ENCODE measurements at regions of chr19 and their contacts with region 1.

Region 1: DNA sequence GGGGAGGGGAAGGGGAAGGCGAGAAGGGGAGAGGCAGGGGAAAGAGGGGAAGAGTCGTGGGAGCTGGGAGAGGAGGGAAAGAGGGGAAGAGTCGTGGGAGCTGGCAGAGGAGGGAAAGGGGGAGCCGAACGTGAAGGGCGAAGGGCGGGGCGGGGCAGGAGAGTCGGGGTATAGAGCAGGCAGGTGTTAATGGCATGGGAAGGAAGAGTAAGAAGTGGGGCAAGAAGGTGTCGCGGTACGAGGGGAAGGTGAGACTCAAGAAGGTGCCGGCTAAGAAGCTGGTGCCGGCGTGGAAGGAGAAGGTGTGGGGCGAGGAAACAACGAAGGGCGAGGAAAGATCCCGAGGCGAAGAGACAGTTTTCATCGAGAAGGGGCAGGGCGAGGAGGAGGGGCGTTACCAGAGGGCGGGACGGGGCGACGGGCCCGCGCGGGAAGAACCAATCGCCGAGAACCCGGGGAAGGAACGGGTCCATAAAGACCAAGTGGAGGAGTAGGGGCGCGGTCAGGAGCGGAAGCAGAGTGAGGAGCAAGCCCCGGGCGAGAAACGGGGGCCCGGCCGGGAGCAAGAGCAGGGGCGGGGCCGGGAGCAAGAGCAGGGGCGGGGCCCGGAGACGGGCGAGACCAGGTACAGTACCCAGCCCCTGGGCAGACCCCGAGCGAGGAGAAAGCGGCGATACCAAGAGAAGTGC is 463 bp downstream of the CATSPERG start:
- DNase-seq: peak; percentile 98
- H3K4me3 Mint-ChIP-seq: peak overlapping the region; percentile 96
- H3K27ac Mint-ChIP-seq: peak overlapping the region; percentile 96
- H3K4me1 Mint-ChIP-seq: peaks cover 14% of the 10 kb centered on the region
- H3K27me3 Mint-ChIP-seq: no peaks in the 10 kb centered on the region

Region 2: GRCh38 chr19:37217855-37218591 is 1118.1 kb before region 1 on chr19 and contains the start of gene ZNF383:
- CTCF ChIA-PET with region 1: no interaction called
- intact Hi-C with region 1: loop called (anchors 5 kb)
- DNase-seq: peak; percentile 87
- H3K4me3 Mint-ChIP-seq: peak within 1 kb of the TSS; percentile 88
- H3K27ac Mint-ChIP-seq: peak within 1 kb of the TSS; percentile 92
- H3K4me1 Mint-ChIP-seq: peaks cover 16% of the 10 kb centered on the region
- H3K27me3 Mint-ChIP-seq: no peaks in the 10 kb centered on the region
- total RNA-seq, gene ZNF383: 8.4 to 9.1 TPM

Region 3: GRCh38 chr19:38213911-38214625 is 122.0 kb before region 1 on chr19:
- CTCF ChIA-PET with region 1: no interaction called
- intact Hi-C with region 1: no loop called
- DNase-seq: peak; percentile 66
- H3K4me3 Mint-ChIP-seq: peak overlapping the region; percentile 27
- H3K27ac Mint-ChIP-seq: peak overlapping the region; percentile 24
- H3K4me1 Mint-ChIP-seq: peaks cover 21% of the 10 kb centered on the region
- H3K27me3 Mint-ChIP-seq: peaks cover 59% of the 10 kb centered on the region

Region 4: GRCh38 chr19:38229585-38230073 is 106.5 kb before region 1 on chr19:
- CTCF ChIA-PET with region 1: interaction called, 17 read pairs
- intact Hi-C with region 1: loop called (anchors 1 kb)
- DNase-seq: peak; percentile 71
- H3K4me3 Mint-ChIP-seq: no peak overlapping the region
- H3K27ac Mint-ChIP-seq: no peak overlapping the region
- H3K4me1 Mint-ChIP-seq: peaks cover 15% of the 10 kb centered on the region
- H3K27me3 Mint-ChIP-seq: peaks cover 54% of the 10 kb centered on the region

Region 5: GRCh38 chr19:38315657-38316476 is 20.2 kb before region 1 on chr19 and contains the start of gene YIF1B:
- CTCF ChIA-PET with region 1: no interaction called
- intact Hi-C with region 1: loop called (anchors 1 kb)
- DNase-seq: peak; percentile 98
- H3K4me3 Mint-ChIP-seq: peak within 1 kb of the TSS; percentile 89
- H3K27ac Mint-ChIP-seq: peak within 1 kb of the TSS; percentile 92
- H3K4me1 Mint-ChIP-seq: peaks cover 50% of the 10 kb centered on the region
- H3K27me3 Mint-ChIP-seq: no peaks in the 10 kb centered on the region
- total RNA-seq, gene YIF1B: 56.0 to 61.1 TPM

Region 6: GRCh38 chr19:38387550-38388348 is 51.7 kb after region 1 on chr19 and contains the start of gene GGN:
- CTCF ChIA-PET with region 1: no interaction called
- intact Hi-C with region 1: loop called (anchors 1 kb)
- DNase-seq: peak; percentile 87
- H3K4me3 Mint-ChIP-seq: peak within 1 kb of the TSS; percentile 78
- H3K27ac Mint-ChIP-seq: no peak within 1 kb of the TSS
- H3K4me1 Mint-ChIP-seq: peaks cover 22% of the 10 kb centered on the region
- H3K27me3 Mint-ChIP-seq: peaks cover 18% of the 10 kb centered on the region
- total RNA-seq, gene GGN: 0.26 to 0.40 TPM

Region 7: DNA sequence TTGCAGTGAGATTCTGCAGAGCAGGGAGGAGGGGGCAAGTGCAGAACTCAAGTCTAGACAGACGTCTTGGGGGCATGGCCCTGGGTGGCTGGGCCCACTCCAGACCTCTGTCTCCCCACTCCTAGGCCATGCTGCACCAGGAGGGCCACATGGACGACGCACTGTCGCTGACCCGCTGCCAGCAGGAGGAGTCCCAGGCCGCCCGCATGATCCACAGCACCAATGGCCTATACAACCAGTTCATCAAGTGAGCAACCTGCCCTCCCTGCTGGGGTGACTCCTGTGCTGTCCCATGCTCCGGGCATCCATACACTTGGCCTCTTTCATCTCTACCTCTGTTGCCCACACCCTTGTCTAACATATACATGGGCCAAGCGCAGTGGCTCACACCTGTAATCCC is 115.5 kb after region 1 on chr19:
- CTCF ChIA-PET with region 1: no interaction called
- intact Hi-C with region 1: no loop called
- DNase-seq: no peak
- H3K4me3 Mint-ChIP-seq: no peak overlapping the region
- H3K27ac Mint-ChIP-seq: no peak overlapping the region
- H3K4me1 Mint-ChIP-seq: no peaks in the 10 kb centered on the region
- H3K27me3 Mint-ChIP-seq: no peaks in the 10 kb centered on the region

Region 8: GRCh38 chr19:38929929-38930775 is 594.1 kb after region 1 on chr19 and contains the start of gene SARS2:
- CTCF ChIA-PET with region 1: no interaction called
- intact Hi-C with region 1: loop called (anchors 1 kb)
- DNase-seq: peak; percentile 94
- H3K4me3 Mint-ChIP-seq: peak within 1 kb of the TSS; percentile 98
- H3K27ac Mint-ChIP-seq: peak within 1 kb of the TSS; percentile 96
- H3K4me1 Mint-ChIP-seq: peaks cover 41% of the 10 kb centered on the region
- H3K27me3 Mint-ChIP-seq: no peaks in the 10 kb centered on the region
- total RNA-seq, gene SARS2: 43.6 to 52.6 TPM

Measured in activated naive CD4-positive, alpha-beta T cell treated with anti-CD3 and anti-CD28 coated beads for 36 hours (primary cell).